ENCODE measurements at regions of chr2 and their contacts with region 1.

Region 1: GRCh38 chr2:174985630-174986029 is 19.6 kb downstream of the CHN1 start:
- DNase-seq: no peak
- H3K4me3 ChIP-seq: no peak overlapping the region
- H3K27ac ChIP-seq: no peak overlapping the region
- H3K4me1 ChIP-seq: no peaks in the 10 kb centered on the region
- H3K27me3 ChIP-seq: no peaks in the 10 kb centered on the region
- CTCF ChIP-seq: peak; percentile 42

Region 2: GRCh38 chr2:174771631-174772471 is 213.8 kb before region 1 on chr2:
- intact Hi-C with region 1: loop called (anchors 2 kb)
- DNase-seq: peak; percentile 61
- H3K4me3 ChIP-seq: no peak overlapping the region
- H3K27ac ChIP-seq: no peak overlapping the region
- H3K4me1 ChIP-seq: no peaks in the 10 kb centered on the region
- H3K27me3 ChIP-seq: no peaks in the 10 kb centered on the region
- CTCF ChIP-seq: peak; percentile 64

Region 3: GRCh38 chr2:174888646-174889271 is 96.9 kb before region 1 on chr2:
- intact Hi-C with region 1: no loop called
- DNase-seq: no peak
- H3K4me3 ChIP-seq: no peak overlapping the region
- H3K27ac ChIP-seq: no peak overlapping the region
- H3K4me1 ChIP-seq: no peaks in the 10 kb centered on the region
- H3K27me3 ChIP-seq: no peaks in the 10 kb centered on the region
- CTCF ChIP-seq: no peak

Measured in colonic mucosa (tissue), 4 donors.